Caco-2 (cell line): ENCODE measurements at regions of chr15 and their contacts with region 1.

Region 1: DNA sequence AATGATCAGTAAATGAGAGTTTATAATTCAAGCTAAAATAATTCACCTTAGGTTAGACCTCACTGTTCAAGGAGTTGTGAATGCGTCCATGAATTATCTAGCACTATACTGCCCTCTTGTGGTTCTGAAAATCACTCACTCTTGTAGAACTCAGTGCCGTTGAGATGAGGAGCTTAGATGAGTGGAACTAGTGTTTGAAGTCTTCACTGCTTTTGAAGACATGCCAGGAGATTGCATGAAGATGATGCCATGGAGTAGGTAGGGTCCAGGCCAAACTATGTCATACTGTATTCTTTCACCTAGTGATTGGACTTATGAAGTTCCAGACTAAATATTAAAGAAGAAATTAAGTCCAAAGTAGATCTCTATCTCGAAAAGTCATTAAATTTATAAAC is 28.8 kb downstream of the LYSMD4 start:
- DNase-seq: peak in 1 of 2 experiments; percentile 72
- H3K4me3 ChIP-seq: no peak overlapping the region
- H3K4me3 Mint-ChIP-seq: no peak overlapping the region
- H3K27ac Mint-ChIP-seq: no peak overlapping the region
- H3K4me1 ChIP-seq: peaks cover 3% of the 10 kb centered on the region; the same call in 1 of the 2 replicates
- H3K4me1 Mint-ChIP-seq: peaks cover 12% of the 10 kb centered on the region
- H3K27me3 ChIP-seq: no peaks in the 10 kb centered on the region
- H3K27me3 Mint-ChIP-seq: no peaks in the 10 kb centered on the region
- CTCF ChIP-seq: peak; percentile 42 to 64

Region 2: GRCh38 chr15:99273801-99274200 is 430.6 kb before region 1 on chr15:
- CTCF ChIA-PET with region 1: interaction called, 25 read pairs
- POLR2A ChIA-PET with region 1: no interaction called
- intact Hi-C with region 1: loop called (anchors 1 kb)
- DNase-seq: no peak
- H3K4me3 ChIP-seq: no peak overlapping the region
- H3K4me3 Mint-ChIP-seq: no peak overlapping the region
- H3K27ac Mint-ChIP-seq: no peak overlapping the region
- H3K4me1 ChIP-seq: no peaks in the 10 kb centered on the region
- H3K4me1 Mint-ChIP-seq: no peaks in the 10 kb centered on the region
- H3K27me3 ChIP-seq: no peaks in the 10 kb centered on the region
- H3K27me3 Mint-ChIP-seq: no peaks in the 10 kb centered on the region
- CTCF ChIP-seq: no peak

Region 3: GRCh38 chr15:99385865-99386264 is 318.6 kb before region 1 on chr15:
- CTCF ChIA-PET with region 1: interaction called, 6 read pairs
- POLR2A ChIA-PET with region 1: no interaction called
- intact Hi-C with region 1: loop called (anchors 2 kb)
- DNase-seq: peak in 1 of 2 experiments; percentile 10
- H3K4me3 ChIP-seq: no peak overlapping the region
- H3K4me3 Mint-ChIP-seq: no peak overlapping the region
- H3K27ac Mint-ChIP-seq: no peak overlapping the region
- H3K4me1 ChIP-seq: peaks cover 17% of the 10 kb centered on the region
- H3K4me1 Mint-ChIP-seq: peaks cover 7% of the 10 kb centered on the region
- H3K27me3 ChIP-seq: no peaks in the 10 kb centered on the region
- H3K27me3 Mint-ChIP-seq: no peaks in the 10 kb centered on the region
- CTCF ChIP-seq: no peak

Region 4: DNA sequence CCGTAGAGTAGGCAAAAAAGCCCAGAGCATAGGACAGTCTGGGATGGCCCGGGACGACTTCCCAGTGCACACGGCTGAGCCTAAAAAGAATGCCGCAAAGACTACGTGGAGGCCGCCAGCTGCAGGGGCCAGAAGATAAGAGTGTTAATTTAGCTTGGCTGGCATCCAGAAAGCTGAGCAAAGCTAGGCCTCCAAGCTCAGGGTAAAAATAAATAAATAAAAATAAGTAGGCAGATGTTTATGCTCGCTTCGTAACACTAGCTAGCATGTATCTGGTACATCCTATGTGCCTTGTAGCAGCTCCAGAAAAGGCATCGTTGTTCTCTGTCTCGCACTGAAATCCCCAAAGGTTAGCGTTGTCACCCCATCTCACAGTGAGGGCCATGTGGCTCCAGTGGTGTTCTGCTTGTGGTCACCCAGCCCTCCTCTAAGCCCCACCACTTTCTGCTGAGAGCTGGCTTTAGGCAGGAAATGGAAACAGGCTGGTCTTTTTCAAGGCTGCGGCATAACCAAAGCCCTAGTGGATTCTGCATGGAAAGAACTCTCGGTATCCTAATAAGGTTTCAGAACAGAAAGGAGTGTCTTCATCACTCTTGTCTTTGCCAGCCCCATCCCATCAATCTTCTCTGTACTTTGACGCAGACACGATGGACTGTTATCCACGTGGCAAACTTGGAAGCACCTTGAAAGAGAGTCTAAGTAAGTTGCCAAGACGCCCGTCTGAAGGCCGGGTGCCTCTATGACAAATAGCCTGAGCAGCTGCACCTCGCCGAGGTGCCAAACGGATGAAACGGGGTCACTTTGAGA is 196.7 kb before region 1 on chr15:
- CTCF ChIA-PET with region 1: interaction called, 3 read pairs
- POLR2A ChIA-PET with region 1: no interaction called
- intact Hi-C with region 1: loop called (anchors 5 kb)
- DNase-seq: no peak
- H3K4me3 ChIP-seq: no peak overlapping the region
- H3K4me3 Mint-ChIP-seq: no peak overlapping the region
- H3K27ac Mint-ChIP-seq: no peak overlapping the region
- H3K4me1 ChIP-seq: no peaks in the 10 kb centered on the region
- H3K4me1 Mint-ChIP-seq: no peaks in the 10 kb centered on the region
- H3K27me3 ChIP-seq: no peaks in the 10 kb centered on the region
- H3K27me3 Mint-ChIP-seq: peaks cover 5% of the 10 kb centered on the region
- CTCF ChIP-seq: no peak

Region 5: DNA sequence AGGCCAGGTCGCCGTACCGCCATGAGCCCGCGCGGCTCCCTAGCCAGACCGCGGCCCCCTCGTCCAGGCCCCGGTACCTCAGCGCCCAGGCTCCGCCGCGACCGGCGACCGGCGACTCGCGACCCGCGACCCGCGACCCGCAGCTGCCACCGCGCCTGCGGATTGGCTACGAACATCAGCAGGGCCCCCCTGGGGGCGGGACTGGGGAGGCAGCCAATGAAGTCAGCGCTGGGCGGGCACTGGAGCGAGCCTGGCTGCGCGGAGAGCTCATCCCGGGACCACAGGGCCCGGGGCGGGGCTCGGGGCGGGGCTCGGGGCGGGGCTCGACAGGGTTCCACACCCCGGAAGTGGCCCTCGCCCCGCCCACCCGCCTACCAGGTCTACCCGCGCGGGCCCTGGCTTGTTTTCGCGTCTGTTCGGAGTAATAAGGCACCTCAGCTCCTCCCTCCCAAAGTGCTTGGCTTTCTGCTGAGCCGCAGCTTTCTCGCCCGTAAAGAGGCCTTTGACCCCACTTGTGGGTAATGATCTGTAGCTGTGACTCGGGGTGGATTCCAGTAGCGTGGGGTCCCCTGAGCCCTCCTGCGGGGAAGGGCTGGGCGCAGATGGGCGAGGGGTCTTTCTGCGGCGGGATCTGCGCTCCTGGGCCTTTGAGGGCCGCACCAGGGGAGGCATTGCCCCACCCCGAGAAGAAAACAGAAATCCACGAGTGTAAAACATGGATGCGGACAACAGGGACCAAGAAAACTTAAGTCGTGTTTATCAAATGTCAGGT is 29.0 kb after region 1 on chr15 and contains the start of gene LYSMD4:
- CTCF ChIA-PET with region 1: interaction called, 38 read pairs
- POLR2A ChIA-PET with region 1: interaction called, 7 read pairs
- intact Hi-C with region 1: no loop called
- DNase-seq: peak; percentile 97
- H3K4me3 ChIP-seq: peak within 1 kb of the TSS; percentile 75
- H3K4me3 Mint-ChIP-seq: peak within 1 kb of the TSS; percentile 85
- H3K27ac Mint-ChIP-seq: peak within 1 kb of the TSS; percentile 96
- H3K4me1 ChIP-seq: peaks cover 8% of the 10 kb centered on the region; the same call in 1 of the 2 replicates
- H3K4me1 Mint-ChIP-seq: no peaks in the 10 kb centered on the region
- H3K27me3 ChIP-seq: no peaks in the 10 kb centered on the region
- H3K27me3 Mint-ChIP-seq: no peaks in the 10 kb centered on the region
- CTCF ChIP-seq: no peak
- total RNA-seq, gene LYSMD4: 14.4 and 15.9 TPM in 2 replicates

Region 6: DNA sequence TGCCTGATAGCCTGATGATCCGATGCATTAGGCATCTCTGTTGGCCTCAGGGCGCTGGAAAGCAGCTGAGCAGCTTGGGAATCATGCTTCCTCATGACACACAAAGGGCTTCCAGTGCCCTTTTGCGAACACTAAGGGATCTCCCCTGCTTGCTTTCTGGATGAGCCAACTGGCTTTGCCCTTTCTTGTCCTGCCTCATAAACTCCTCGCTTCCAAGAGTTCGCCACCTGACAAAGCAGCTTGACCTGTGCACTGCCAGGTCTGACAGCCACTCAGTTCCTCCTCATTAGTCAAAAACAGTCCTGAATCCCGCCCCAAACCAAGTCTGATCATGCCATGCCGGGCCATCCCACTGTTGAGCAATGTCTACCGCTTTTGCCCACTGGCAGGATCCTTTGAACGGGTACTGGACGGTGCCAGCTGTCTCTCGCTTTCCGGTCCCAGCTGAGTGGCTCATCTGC is 294.2 kb after region 1 on chr15:
- CTCF ChIA-PET with region 1: no interaction called
- POLR2A ChIA-PET with region 1: no interaction called
- intact Hi-C with region 1: no loop called
- DNase-seq: no peak
- H3K4me3 ChIP-seq: no peak overlapping the region
- H3K4me3 Mint-ChIP-seq: no peak overlapping the region
- H3K27ac Mint-ChIP-seq: no peak overlapping the region
- H3K4me1 ChIP-seq: peaks cover 3% of the 10 kb centered on the region; the same call in 1 of the 2 replicates
- H3K4me1 Mint-ChIP-seq: peaks cover 6% of the 10 kb centered on the region
- H3K27me3 ChIP-seq: no peaks in the 10 kb centered on the region
- H3K27me3 Mint-ChIP-seq: no peaks in the 10 kb centered on the region
- CTCF ChIP-seq: no peak